Activated naive CD8-positive, alpha-beta T cell treated with anti-CD3 and anti-CD28 coated beads, Interleukin-2, amount 10 ng/mL, durations not matched to agents 7 days and 5 days (primary cell): ENCODE measurements at regions of chr5 and their contacts with region 1.

Region 1: DNA sequence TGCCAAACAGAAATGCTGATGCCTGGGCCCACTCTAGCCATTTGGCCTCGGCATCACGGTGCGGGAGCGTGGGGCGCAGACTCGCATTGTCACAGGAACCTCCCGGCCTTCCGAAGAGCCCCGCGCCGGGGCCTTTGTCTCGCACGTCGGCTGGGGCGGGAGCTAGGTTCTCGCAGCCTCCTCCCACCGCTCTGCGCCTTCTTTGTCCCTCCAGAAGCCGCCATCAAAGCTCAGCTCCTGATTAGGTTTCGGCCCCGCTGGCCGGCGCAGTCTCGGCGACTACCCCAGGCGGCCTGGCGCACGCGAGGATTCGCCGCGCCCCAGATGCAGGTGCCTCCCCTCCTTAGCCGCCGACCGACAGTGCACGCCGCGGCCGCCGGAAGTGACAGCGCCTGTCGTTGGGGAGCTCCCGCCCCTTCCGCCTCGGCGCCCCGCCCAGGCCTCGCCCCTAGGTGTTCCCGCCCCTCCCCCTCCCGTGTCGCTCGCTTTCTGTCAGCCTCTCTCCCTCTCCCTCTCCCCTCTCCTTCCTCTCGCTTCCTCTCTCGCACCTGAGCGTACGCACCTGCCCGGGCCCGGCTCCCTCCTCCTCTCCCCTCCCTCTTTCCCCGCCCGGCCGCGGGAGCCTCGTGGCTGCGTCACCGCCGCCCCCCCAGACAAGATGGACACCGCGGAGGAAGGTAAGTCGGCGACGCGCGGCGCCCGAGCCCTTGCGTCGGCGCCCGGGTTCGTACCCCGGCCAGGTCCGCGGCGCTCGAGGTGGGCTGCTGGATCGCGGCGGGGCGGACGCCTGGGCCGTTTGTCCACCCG is at the start of gene MARCHF6:
- DNase-seq: peak; percentile 96
- ATAC-seq: peak; percentile 84
- H3K4me3 Mint-ChIP-seq: peak within 1 kb of the TSS; percentile 100
- H3K27ac Mint-ChIP-seq: peak within 1 kb of the TSS; percentile 100
- H3K4me1 Mint-ChIP-seq: peaks cover 33% of the 10 kb centered on the region
- H3K27me3 Mint-ChIP-seq: no peaks in the 10 kb centered on the region
- total RNA-seq, gene MARCHF6: 127 to 135 TPM

Region 2: DNA sequence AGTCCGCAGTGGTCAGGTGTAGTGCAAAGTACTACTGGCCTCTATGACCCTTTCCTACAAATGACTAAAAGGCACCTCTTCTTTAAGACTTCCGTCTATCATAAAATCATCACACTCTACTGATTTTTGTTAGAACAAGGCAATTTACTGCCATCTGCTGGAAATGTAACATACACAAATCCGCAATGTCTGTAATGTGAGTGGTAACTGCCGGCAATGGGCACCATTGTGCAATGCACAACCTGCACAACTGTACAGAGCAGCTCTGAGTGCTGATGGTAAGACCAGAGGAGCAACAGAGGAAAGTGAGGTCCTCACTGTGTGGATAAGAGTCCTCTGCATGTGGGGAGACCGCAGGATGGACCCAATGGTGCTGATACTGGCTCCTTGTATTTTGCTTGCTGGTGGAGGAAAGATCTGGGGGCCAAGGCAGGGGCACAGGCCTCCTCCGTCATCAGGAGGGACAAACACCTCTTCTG is 207.5 kb before region 1 on chr5:
- POLR2A ChIA-PET with region 1: no interaction called
- DNase-seq: no peak
- ATAC-seq: no peak
- H3K4me3 Mint-ChIP-seq: no peak overlapping the region
- H3K27ac Mint-ChIP-seq: no peak overlapping the region
- H3K4me1 Mint-ChIP-seq: no peaks in the 10 kb centered on the region
- H3K27me3 Mint-ChIP-seq: no peaks in the 10 kb centered on the region

Region 3: GRCh38 chr5:10249948-10250803 is 103.3 kb before region 1 on chr5 and contains the start of gene CCT5:
- POLR2A ChIA-PET with region 1: interaction called, 40 read pairs
- DNase-seq: peak; percentile 88
- ATAC-seq: peak; percentile 87
- H3K4me3 Mint-ChIP-seq: peak within 1 kb of the TSS; percentile 97
- H3K27ac Mint-ChIP-seq: peak within 1 kb of the TSS; percentile 99
- H3K4me1 Mint-ChIP-seq: peaks cover 43% of the 10 kb centered on the region
- H3K27me3 Mint-ChIP-seq: no peaks in the 10 kb centered on the region
- total RNA-seq, gene CCT5: 170 to 182 TPM

Region 4: DNA sequence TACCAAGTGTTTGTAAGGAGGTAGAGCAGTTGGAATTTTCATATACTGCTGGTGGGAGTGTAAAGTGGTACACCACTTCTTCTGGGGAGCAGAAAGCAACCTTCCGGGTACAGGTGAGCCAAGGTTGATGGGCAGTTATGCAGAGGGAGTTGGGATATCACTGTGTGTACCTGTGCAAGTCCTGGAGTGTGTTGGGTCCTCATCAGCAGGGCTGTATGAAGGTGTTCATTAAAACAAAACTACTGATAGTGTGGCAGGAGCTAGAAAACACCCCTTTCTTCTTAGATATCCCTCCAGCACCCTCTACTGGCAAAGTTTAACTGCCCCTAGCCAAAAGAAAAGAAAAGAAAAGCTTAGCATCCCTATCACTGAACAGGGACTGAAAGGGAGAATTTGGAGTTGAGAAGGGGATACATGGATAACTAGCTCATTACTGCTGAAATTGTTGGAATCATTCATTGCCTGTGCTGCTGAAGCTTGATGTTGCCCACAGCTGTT is 10.8 kb after region 1 on chr5:
- POLR2A ChIA-PET with region 1: interaction called, 15 read pairs
- DNase-seq: no peak
- ATAC-seq: peak; percentile 33
- H3K4me3 Mint-ChIP-seq: no peak overlapping the region
- H3K27ac Mint-ChIP-seq: no peak overlapping the region
- H3K4me1 Mint-ChIP-seq: peaks cover 24% of the 10 kb centered on the region
- H3K27me3 Mint-ChIP-seq: no peaks in the 10 kb centered on the region

Region 5: GRCh38 chr5:10563945-10564837 is 210.7 kb after region 1 on chr5 and contains the start of gene ANKRD33B:
- POLR2A ChIA-PET with region 1: no interaction called
- DNase-seq: peak; percentile 86
- ATAC-seq: peak; percentile 84
- H3K4me3 Mint-ChIP-seq: peak within 1 kb of the TSS; percentile 86
- H3K27ac Mint-ChIP-seq: peak within 1 kb of the TSS; percentile 77
- H3K4me1 Mint-ChIP-seq: peaks cover 20% of the 10 kb centered on the region
- H3K27me3 Mint-ChIP-seq: peaks cover 29% of the 10 kb centered on the region
- total RNA-seq, gene ANKRD33B: 4.4 to 4.8 TPM